Stomach (tissue), 19 donors: ENCODE measurements at regions of chr11 and their contacts with region 1.

Region 1: GRCh38 chr11:17063171-17064002 is 14.1 kb downstream of the RPS13 start:
- DNase-seq: peak; percentile 77 to 79
- H3K4me3 ChIP-seq: no peak overlapping the region
- H3K27ac ChIP-seq: no peak overlapping the region
- H3K4me1 ChIP-seq: no peaks in the 10 kb centered on the region
- H3K27me3 ChIP-seq: no peaks in the 10 kb centered on the region
- CTCF ChIP-seq: peak in 5 of 7 experiments; percentile 66 to 84 (median 66)
- EP300 ChIP-seq: no peak
- POLR2A ChIP-seq: no peak

Region 2: GRCh38 chr11:16791191-16791961 is 272.0 kb before region 1 on chr11:
- intact Hi-C with region 1: loop called (anchors 10 kb)
- DNase-seq: no peak
- H3K4me3 ChIP-seq: no peak overlapping the region
- H3K27ac ChIP-seq: peak overlapping the region; percentile 11 to 79 (median 66)
- H3K4me1 ChIP-seq: peaks cover 7 to 53% (median 18%) of the 10 kb centered on the region in 4 donors
- H3K27me3 ChIP-seq: no peaks in the 10 kb centered on the region
- CTCF ChIP-seq: no peak
- EP300 ChIP-seq: no peak
- POLR2A ChIP-seq: no peak

Region 3: GRCh38 chr11:16933756-16934603 is 129.4 kb before region 1 on chr11:
- intact Hi-C with region 1: no loop called
- DNase-seq: no peak
- H3K4me3 ChIP-seq: no peak overlapping the region
- H3K27ac ChIP-seq: peak overlapping the region in 2 of 5 donors; percentile 2 to 55
- H3K4me1 ChIP-seq: peaks cover 0 to 46% (median 32%) of the 10 kb centered on the region in 4 donors
- H3K27me3 ChIP-seq: no peaks in the 10 kb centered on the region
- CTCF ChIP-seq: no peak
- EP300 ChIP-seq: no peak
- POLR2A ChIP-seq: no peak

Region 4: GRCh38 chr11:16945671-16946469 is 117.5 kb before region 1 on chr11:
- intact Hi-C with region 1: loop called (anchors 10 kb)
- DNase-seq: peak; percentile 73 to 86
- H3K4me3 ChIP-seq: no peak overlapping the region
- H3K27ac ChIP-seq: peak overlapping the region in 4 of 5 donors; percentile 11 to 63 (median 34)
- H3K4me1 ChIP-seq: peaks cover 6 to 24% (median 8%) of the 10 kb centered on the region in 4 donors
- H3K27me3 ChIP-seq: no peaks in the 10 kb centered on the region
- CTCF ChIP-seq: peak in 5 of 7 experiments; percentile 46 to 75 (median 63)
- EP300 ChIP-seq: no peak
- POLR2A ChIP-seq: no peak